PC-3 (cell line): ENCODE measurements at regions of chr5 and their contacts with region 1.

Region 1: DNA sequence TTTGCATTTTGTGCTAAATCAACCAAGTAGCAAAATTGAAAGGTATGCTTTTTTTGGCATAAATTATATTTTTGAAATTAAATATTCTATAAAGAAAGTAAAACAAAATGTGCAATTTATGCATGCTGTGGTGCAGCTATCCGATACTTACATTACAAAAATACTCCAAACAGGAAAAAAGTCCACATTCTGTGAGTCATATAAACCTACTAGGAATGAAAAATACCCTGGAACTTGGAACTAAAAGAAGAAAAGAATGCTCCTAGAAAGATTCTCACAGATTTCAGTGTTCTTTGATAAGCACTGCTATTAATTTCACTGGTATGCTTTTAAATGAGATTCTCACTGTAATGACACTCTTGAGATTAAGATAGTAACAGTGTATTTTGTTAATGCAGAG is 92.6 kb downstream of the OSMR start:
- DNase-seq: no peak
- ATAC-seq: no peak
- H3K4me3 ChIP-seq: no peak overlapping the region
- H3K27ac ChIP-seq: no peak overlapping the region
- H3K4me1 ChIP-seq: no peaks in the 10 kb centered on the region
- H3K27me3 ChIP-seq: no peaks in the 10 kb centered on the region
- CTCF ChIP-seq: no peak

Region 2: DNA sequence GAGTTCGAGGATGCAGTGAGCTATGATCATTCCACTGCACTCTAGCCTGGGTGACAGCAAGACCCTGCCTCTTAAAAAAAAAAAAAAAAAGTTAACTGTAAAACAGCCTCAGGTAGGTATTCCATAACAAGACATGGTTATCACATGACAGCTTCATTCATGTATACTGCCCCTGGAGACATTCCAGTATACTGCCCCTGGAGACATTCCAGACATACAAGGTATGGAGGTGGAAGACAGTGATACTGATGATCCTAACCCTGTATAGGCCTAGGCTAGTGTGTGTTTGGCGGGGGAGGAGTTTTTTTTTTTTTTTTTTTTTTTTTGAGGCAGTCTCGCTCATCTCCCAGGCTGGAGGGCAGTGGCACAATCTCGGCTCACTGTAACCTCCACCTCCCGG is 30.2 kb after region 1 on chr5:
- CTCF ChIA-PET with region 1: no interaction called
- POLR2A ChIA-PET with region 1: no interaction called
- intact Hi-C with region 1: loop called (anchors 5 kb)
- DNase-seq: peak; percentile 11
- ATAC-seq: no peak
- H3K4me3 ChIP-seq: no peak overlapping the region
- H3K27ac ChIP-seq: no peak overlapping the region
- H3K4me1 ChIP-seq: no peaks in the 10 kb centered on the region
- H3K27me3 ChIP-seq: no peaks in the 10 kb centered on the region
- CTCF ChIP-seq: no peak

Region 3: GRCh38 chr5:39846144-39846543 is 907.7 kb after region 1 on chr5:
- CTCF ChIA-PET with region 1: no interaction called
- POLR2A ChIA-PET with region 1: no interaction called
- intact Hi-C with region 1: no loop called
- DNase-seq: no peak
- ATAC-seq: no peak
- H3K4me3 ChIP-seq: no peak overlapping the region
- H3K27ac ChIP-seq: no peak overlapping the region
- H3K4me1 ChIP-seq: no peaks in the 10 kb centered on the region
- H3K27me3 ChIP-seq: no peaks in the 10 kb centered on the region
- CTCF ChIP-seq: no peak